ENCODE measurements at regions of chr1 and their contacts with region 1.

Region 1: GRCh38 chr1:11757047-11757446 is 4.9 kb upstream of the C1orf167 start:
- DNase-seq: no peak
- ATAC-seq: no peak
- H3K4me3 ChIP-seq: no peak overlapping the region
- H3K27ac ChIP-seq: no peak overlapping the region
- H3K4me1 ChIP-seq: no peaks in the 10 kb centered on the region
- H3K27me3 ChIP-seq: no peaks in the 10 kb centered on the region
- CTCF ChIP-seq: no peak

Region 2: GRCh38 chr1:11384170-11384554 is 372.9 kb before region 1 on chr1:
- CTCF ChIA-PET with region 1: no interaction called
- POLR2A ChIA-PET with region 1: no interaction called
- intact Hi-C with region 1: no loop called
- DNase-seq: peak; percentile 22
- ATAC-seq: no peak
- H3K4me3 ChIP-seq: no peak overlapping the region
- H3K27ac ChIP-seq: no peak overlapping the region
- H3K4me1 ChIP-seq: no peaks in the 10 kb centered on the region
- H3K27me3 ChIP-seq: peaks cover 22% of the 10 kb centered on the region
- CTCF ChIP-seq: no peak

Region 3: GRCh38 chr1:11520531-11521233 is 236.4 kb before region 1 on chr1:
- CTCF ChIA-PET with region 1: no interaction called
- POLR2A ChIA-PET with region 1: no interaction called
- intact Hi-C with region 1: no loop called
- DNase-seq: no peak
- ATAC-seq: no peak
- H3K4me3 ChIP-seq: no peak overlapping the region
- H3K27ac ChIP-seq: no peak overlapping the region
- H3K4me1 ChIP-seq: no peaks in the 10 kb centered on the region
- H3K27me3 ChIP-seq: no peaks in the 10 kb centered on the region
- CTCF ChIP-seq: no peak

Region 4: GRCh38 chr1:11741919-11742558 is 15.0 kb before region 1 on chr1:
- CTCF ChIA-PET with region 1: no interaction called
- POLR2A ChIA-PET with region 1: interaction called, 17 read pairs
- intact Hi-C with region 1: no loop called
- DNase-seq: no peak
- ATAC-seq: no peak
- H3K4me3 ChIP-seq: no peak overlapping the region
- H3K27ac ChIP-seq: no peak overlapping the region
- H3K4me1 ChIP-seq: peaks cover 21% of the 10 kb centered on the region
- H3K27me3 ChIP-seq: no peaks in the 10 kb centered on the region
- CTCF ChIP-seq: no peak

Region 5: GRCh38 chr1:11838349-11839272 is 81.6 kb after region 1 on chr1:
- CTCF ChIA-PET with region 1: no interaction called
- POLR2A ChIA-PET with region 1: no interaction called
- intact Hi-C with region 1: no loop called
- DNase-seq: peak; percentile 64
- ATAC-seq: peak; percentile 95
- H3K4me3 ChIP-seq: no peak overlapping the region
- H3K27ac ChIP-seq: no peak overlapping the region
- H3K4me1 ChIP-seq: no peaks in the 10 kb centered on the region
- H3K27me3 ChIP-seq: no peaks in the 10 kb centered on the region
- CTCF ChIP-seq: peak; percentile 95

Region 6: GRCh38 chr1:11882814-11883538 is 125.9 kb after region 1 on chr1:
- CTCF ChIA-PET with region 1: no interaction called
- POLR2A ChIA-PET with region 1: no interaction called
- intact Hi-C with region 1: no loop called
- DNase-seq: no peak
- ATAC-seq: peak; percentile 48; the same call in 1 of the 2 replicates
- H3K4me3 ChIP-seq: no peak overlapping the region
- H3K27ac ChIP-seq: no peak overlapping the region
- H3K4me1 ChIP-seq: no peaks in the 10 kb centered on the region
- H3K27me3 ChIP-seq: 0 out of 2 replicates have a peak, but pooled peaks cover 4% of the 10 kb centered on the region
- CTCF ChIP-seq: no peak

Measured in PC-3 (cell line).